Activated CD8-positive, alpha-beta T cell treated with anti-CD3 and anti-CD28 coated beads for 36 hours (primary cell): ENCODE measurements at regions of chr7 and their contacts with region 1.

Region 1: GRCh38 chr7:136009488-136010079 is 32.4 kb upstream of the MTPN start:
- DNase-seq: no peak
- ATAC-seq: no peak
- H3K4me3 Mint-ChIP-seq: no peak overlapping the region
- H3K27ac Mint-ChIP-seq: no peak overlapping the region
- H3K4me1 Mint-ChIP-seq: peaks cover 5% of the 10 kb centered on the region
- H3K27me3 Mint-ChIP-seq: peaks cover 5% of the 10 kb centered on the region
- CTCF ChIP-seq: peak; percentile 91

Region 2: DNA sequence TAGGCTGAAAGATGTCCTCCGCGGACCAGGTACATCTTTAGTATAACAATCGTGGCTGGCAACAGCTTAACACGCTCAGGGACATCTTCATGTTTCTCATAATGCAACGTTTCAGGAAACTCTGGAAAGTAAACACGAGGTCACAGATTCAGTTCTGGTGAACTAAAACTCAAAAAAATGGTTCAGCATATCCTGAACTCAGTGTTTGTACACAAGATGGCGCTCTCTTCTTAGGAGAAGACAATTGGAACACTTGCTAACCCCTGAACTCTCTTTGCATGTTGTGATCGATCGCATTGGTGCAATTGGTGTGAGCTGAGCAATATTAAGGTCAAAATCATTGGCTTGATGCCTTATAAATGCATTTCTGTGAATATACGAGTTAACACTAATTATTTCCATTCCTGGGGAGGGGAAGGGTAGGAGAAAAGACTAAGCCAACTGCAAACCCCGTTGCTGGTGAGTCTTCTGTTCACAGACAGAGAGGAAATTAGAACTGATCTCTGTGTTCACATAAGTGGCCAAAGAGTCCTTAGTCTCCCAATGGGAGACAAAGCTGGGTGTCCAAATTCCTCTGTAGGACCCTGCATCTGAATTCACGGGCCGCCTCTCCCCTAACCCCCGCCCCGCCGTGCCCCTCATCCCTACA is 208.4 kb before region 1 on chr7:
- CTCF ChIA-PET with region 1: interaction called, 44 read pairs
- POLR2A ChIA-PET with region 1: no interaction called
- intact Hi-C with region 1: loop called (anchors 1 kb)
- DNase-seq: peak; percentile 22
- ATAC-seq: peak; percentile 47
- H3K4me3 Mint-ChIP-seq: no peak overlapping the region
- H3K27ac Mint-ChIP-seq: no peak overlapping the region
- H3K4me1 Mint-ChIP-seq: peaks cover 4% of the 10 kb centered on the region
- H3K27me3 Mint-ChIP-seq: peaks cover 9% of the 10 kb centered on the region
- CTCF ChIP-seq: peak; percentile 76

Region 3: GRCh38 chr7:135993950-135994349 is 15.6 kb before region 1 on chr7:
- CTCF ChIA-PET with region 1: interaction called, 29 read pairs
- POLR2A ChIA-PET with region 1: no interaction called
- intact Hi-C with region 1: no loop called
- DNase-seq: no peak
- ATAC-seq: peak; percentile 55
- H3K4me3 Mint-ChIP-seq: no peak overlapping the region
- H3K27ac Mint-ChIP-seq: no peak overlapping the region
- H3K4me1 Mint-ChIP-seq: peaks cover 19% of the 10 kb centered on the region
- H3K27me3 Mint-ChIP-seq: peaks cover 5% of the 10 kb centered on the region
- CTCF ChIP-seq: no peak